Activated T-helper 1 cell treated with anti-CD3 and anti-CD28 coated beads, Interleukin-12 subunit alpha, Interleukin-12 subunit beta, Interleukin-2, Interleukin-4 antibody, amounts not matched to agents 30 ng/mL and 10 ng/mL and 1 ng/mL, durations not matched to agents 14 hours and 24 hours and 36 hours (primary cell): ENCODE measurements at regions of chr17 and their contacts with region 1.

Region 1: GRCh38 chr17:40113110-40113906 is 8.5 kb upstream of the MSL1 start:
- DNase-seq: peak; percentile 89
- H3K4me3 Mint-ChIP-seq: peak overlapping the region; percentile 82
- H3K27ac Mint-ChIP-seq: peak overlapping the region; percentile 94
- H3K4me1 Mint-ChIP-seq: peaks cover 43% of the 10 kb centered on the region
- H3K27me3 Mint-ChIP-seq: peaks cover under 1% of the 10 kb centered on the region

Region 2: DNA sequence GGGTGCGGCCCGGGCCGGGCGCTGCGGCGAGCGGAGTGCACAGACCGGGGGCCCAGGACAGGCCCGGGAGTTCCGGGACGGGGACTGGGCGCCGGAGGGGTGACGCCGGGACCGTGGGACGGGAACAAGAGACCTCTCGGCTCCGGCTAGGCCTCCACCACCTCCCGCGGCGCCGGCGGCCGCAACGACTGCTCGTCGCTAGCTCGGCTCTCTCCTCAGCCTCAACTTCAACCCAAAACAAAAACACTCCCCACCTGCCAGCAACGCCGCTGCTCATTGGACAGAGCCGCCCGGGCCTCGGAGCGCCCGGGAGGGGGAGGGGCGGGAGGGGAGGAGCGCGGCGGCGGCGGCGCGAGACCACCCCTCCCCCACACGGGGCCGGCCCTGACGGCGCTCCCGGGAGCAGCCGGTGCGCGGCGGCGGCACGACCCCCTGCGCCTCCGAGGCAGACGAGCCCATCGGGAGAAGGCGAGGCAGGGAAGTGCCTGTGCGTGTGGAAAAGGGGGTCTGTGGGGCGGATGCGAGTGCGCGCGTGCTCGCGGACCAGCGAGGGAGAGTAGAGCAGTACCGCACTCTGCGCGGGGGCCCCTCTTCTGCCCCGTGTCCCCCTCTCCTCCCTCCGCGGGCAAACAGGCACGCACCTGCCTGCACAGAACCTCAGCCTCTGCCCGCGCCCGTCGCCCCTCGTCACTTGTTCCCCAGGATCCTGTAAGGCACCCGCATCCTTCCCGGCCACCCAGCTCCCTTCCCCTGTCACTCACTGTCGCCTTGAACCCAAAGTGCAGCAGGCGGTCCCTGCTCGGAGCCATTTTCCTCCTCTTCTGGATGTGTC is 711.7 kb before region 1 on chr17 and contains the start of gene FBXL20:
- intact Hi-C with region 1: no loop called
- DNase-seq: peak; percentile 84
- H3K4me3 Mint-ChIP-seq: peak within 1 kb of the TSS; percentile 94
- H3K27ac Mint-ChIP-seq: peak within 1 kb of the TSS; percentile 98
- H3K4me1 Mint-ChIP-seq: peaks cover 40% of the 10 kb centered on the region
- H3K27me3 Mint-ChIP-seq: no peaks in the 10 kb centered on the region
- total RNA-seq, gene FBXL20: 20.1 and 25.6 TPM in 2 replicates

Region 3: DNA sequence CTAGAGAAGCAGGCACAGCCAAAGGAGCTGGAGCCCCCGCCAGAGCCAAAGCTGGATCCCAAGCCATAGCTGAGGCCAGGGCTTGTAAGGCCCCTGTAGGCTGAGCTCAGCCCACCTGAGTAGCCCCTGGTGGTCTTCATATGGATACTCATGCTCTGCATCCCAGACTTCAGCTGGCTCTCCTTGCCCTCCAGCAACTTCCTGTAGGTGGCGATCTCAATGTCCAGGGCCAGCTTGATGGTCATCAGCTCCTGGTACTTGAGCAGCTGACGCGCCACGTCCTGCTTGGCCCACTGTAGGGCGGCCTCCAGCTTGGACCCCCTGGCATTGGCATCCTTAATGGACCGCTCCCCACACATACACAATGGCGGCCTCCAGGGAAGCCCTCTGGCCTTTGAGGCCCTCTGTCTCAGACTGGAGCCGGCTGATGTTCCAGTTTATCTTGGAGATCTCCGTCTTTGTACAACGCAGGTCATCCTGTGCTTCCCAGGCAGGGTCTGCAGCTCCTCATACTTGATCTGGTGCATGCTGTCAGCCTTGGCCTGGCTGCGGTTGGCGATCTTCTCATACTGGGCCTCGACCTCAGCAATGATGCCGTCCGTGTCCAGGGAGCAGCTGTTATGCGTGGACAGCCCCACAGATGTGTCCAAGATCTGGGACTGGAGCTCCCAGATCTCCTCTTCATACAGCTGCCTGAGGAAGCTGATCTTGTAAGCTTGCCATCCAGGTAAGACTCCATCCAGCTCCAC is 278.1 kb before region 1 on chr17:
- intact Hi-C with region 1: no loop called
- DNase-seq: no peak
- H3K4me3 Mint-ChIP-seq: no peak overlapping the region
- H3K27ac Mint-ChIP-seq: no peak overlapping the region
- H3K4me1 Mint-ChIP-seq: peaks cover 3% of the 10 kb centered on the region
- H3K27me3 Mint-ChIP-seq: peaks cover 2% of the 10 kb centered on the region

Region 4: DNA sequence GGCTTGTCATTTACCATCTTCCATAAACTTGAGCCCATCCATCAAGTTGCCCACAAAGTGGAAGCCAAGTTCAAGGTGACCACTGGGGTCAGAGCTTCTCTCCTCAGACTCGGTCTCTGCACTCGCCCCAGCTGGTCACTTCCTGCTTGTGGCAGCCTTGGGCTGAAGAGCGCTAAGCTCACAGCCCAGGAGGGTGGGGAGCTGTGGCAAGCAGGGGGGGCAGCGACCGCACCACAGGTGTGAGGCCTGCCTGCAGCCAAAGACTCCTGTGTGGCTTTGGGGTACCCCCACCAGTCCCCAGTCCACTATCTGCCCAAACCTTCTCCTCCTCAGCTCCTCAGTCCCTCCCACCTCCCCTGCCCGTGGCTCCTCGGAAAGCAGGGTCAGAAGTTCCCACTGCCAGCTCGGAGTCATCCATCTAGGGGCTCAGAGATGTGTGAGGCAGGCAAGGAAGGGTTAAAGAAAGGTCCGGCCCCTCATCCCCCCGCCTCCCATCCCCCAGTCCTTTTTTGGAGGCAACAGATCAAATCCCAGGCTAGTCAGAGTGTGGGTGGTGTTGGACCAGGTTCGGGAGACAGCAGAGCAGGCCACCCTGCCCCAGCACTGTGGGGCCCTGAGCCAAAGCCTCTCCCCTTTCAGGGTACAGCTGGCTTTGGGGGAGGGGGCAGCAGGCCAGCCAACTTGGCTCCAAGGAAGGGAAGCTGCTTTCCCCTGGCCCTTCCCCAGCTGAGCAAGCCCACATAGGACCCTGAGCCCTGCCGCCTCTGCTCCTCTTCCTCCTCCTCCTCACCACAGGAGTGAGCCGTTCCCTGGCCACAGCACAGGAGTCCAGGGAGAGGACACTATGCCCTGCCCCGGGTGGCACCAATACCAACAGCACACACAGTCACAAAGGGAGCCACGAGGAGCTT is 94.8 kb before region 1 on chr17:
- intact Hi-C with region 1: loop called (anchors 1 kb)
- DNase-seq: no peak
- H3K4me3 Mint-ChIP-seq: no peak overlapping the region
- H3K27ac Mint-ChIP-seq: no peak overlapping the region
- H3K4me1 Mint-ChIP-seq: peaks cover 6% of the 10 kb centered on the region
- H3K27me3 Mint-ChIP-seq: no peaks in the 10 kb centered on the region

Region 5: GRCh38 chr17:40098846-40099618 is 14.3 kb before region 1 on chr17:
- intact Hi-C with region 1: loop called (anchors 1 kb)
- DNase-seq: peak; percentile 86
- H3K4me3 Mint-ChIP-seq: peak overlapping the region; percentile 92
- H3K27ac Mint-ChIP-seq: peak overlapping the region; percentile 85
- H3K4me1 Mint-ChIP-seq: peaks cover 81% of the 10 kb centered on the region
- H3K27me3 Mint-ChIP-seq: peaks cover 11% of the 10 kb centered on the region

Region 6: DNA sequence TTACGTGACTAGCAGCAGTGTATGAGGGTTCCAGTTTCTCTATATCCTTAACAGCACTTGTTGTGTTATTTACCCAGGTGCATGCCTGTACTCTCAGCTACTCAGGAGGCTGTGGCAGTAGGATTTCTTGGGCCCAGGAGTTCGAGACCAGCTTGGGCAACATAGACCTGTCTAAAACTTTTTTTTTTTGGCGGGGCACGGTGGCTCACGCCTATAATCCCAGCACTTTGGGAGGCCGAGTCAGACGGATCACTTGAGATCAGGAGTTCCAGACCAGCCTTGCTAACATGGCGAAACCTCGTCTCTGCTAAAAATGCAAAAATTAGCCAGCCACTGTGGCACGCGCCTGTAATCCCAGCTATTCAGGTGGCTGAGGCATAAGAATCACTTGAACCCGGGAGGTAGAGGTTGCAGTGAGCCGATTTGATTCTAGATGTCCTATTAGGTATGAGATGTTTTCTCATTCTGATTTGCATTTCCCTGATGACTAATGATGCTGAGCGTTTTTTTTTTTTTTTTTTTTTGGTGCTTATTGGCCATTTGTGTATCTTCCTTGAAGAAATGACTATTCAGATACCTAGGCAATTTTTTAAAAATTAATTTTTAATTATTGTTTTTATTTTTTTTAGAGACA is 40.4 kb after region 1 on chr17:
- intact Hi-C with region 1: loop called (anchors 1 kb)
- DNase-seq: no peak
- H3K4me3 Mint-ChIP-seq: no peak overlapping the region
- H3K27ac Mint-ChIP-seq: peak overlapping the region; percentile 98
- H3K4me1 Mint-ChIP-seq: peaks cover 51% of the 10 kb centered on the region
- H3K27me3 Mint-ChIP-seq: no peaks in the 10 kb centered on the region

Region 7: DNA sequence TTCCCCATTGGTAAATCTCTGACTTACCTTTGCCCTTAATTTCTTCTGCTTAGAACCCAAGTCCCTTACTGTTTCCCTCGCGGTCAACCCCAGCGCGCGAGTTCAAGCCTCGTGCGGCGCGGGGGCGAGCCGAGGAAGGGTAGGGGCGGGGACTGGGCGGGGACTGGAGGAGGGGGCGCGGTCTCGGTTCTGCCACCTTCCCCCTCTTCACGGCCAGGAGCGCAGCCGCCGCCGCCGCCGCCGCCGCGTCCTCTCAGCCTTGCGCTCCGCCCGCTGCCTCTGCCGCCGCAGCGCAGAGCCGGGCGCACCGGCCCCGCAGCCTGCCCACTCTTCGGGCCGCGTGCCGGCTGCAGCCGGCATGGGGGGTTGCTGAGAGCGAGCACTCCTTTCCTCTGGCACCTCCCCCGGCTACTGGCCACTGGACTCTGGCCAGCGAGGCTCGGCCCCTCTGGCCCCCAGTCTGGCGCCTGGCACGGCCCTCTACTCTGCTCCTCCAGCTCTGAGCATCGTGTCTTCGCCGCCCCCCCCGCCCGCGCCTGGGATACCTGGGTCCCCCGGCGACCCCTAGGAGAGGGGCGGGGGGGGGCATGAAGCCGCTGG is 64.1 kb after region 1 on chr17 and contains the start of gene RAPGEFL1:
- intact Hi-C with region 1: loop called (anchors 2 kb)
- DNase-seq: peak; percentile 69
- H3K4me3 Mint-ChIP-seq: peak within 1 kb of the TSS; percentile 51
- H3K27ac Mint-ChIP-seq: peak within 1 kb of the TSS; percentile 70
- H3K4me1 Mint-ChIP-seq: peaks cover 8% of the 10 kb centered on the region
- H3K27me3 Mint-ChIP-seq: no peaks in the 10 kb centered on the region
- total RNA-seq, gene RAPGEFL1: 11.8 and 13.0 TPM in 2 replicates

Region 8: GRCh38 chr17:40287494-40288369 is 174.4 kb after region 1 on chr17 and contains the start of gene CDC6:
- intact Hi-C with region 1: loop called (anchors 1 kb)
- DNase-seq: peak; percentile 98
- H3K4me3 Mint-ChIP-seq: peak within 1 kb of the TSS; percentile 99
- H3K27ac Mint-ChIP-seq: peak within 1 kb of the TSS; percentile 98
- H3K4me1 Mint-ChIP-seq: peaks cover 39% of the 10 kb centered on the region
- H3K27me3 Mint-ChIP-seq: no peaks in the 10 kb centered on the region
- total RNA-seq, gene CDC6: 130 and 135 TPM in 2 replicates